Heart right ventricle (tissue), 16 donors: ENCODE measurements at regions of chr11 and their contacts with region 1.

Region 1: GRCh38 chr11:5808500-5809121 is at the start of gene OR52N2:
- DNase-seq: peak; percentile 35 to 78
- ATAC-seq: peak; percentile 81 to 97 (median 94)
- H3K4me3 ChIP-seq: peak within 1 kb of the TSS; percentile 13 to 66 (median 54)
- H3K27ac ChIP-seq: peak within 1 kb of the TSS in 2 of 10 donors; percentile 19 to 50
- H3K4me1 ChIP-seq: peaks cover 0 to 16% (median 5%) of the 10 kb centered on the region in 9 donors
- H3K27me3 ChIP-seq: peaks cover 0 to 6% (median 0%) of the 10 kb centered on the region in 7 donors
- CTCF ChIP-seq: peak; percentile 71 to 92 (median 84)
- total RNA-seq, gene OR52N2: not detected

Region 2: GRCh38 chr11:4626207-4627099 is 1182.2 kb before region 1 on chr11:
- intact Hi-C with region 1: loop called in 2 of 10 experiments (anchors 5 kb)
- DNase-seq: peak in 1 of 2 donors; percentile 65
- ATAC-seq: peak in 7 of 8 donors; percentile 55 to 76 (median 72)
- H3K4me3 ChIP-seq: no peak overlapping the region
- H3K27ac ChIP-seq: no peak overlapping the region
- H3K4me1 ChIP-seq: no peaks in the 10 kb centered on the region
- H3K27me3 ChIP-seq: peaks cover 0 to 3% (median 0%) of the 10 kb centered on the region in 7 donors
- CTCF ChIP-seq: peak; percentile 50 to 77 (median 69)

Region 3: GRCh38 chr11:5123802-5124521 is 684.6 kb before region 1 on chr11:
- intact Hi-C with region 1: loop called in 8 of 10 experiments (anchors 5 to 10 kb)
- DNase-seq: peak; percentile 18 to 54
- ATAC-seq: peak in 5 of 8 donors; percentile 47 to 70 (median 59)
- H3K4me3 ChIP-seq: no peak overlapping the region
- H3K27ac ChIP-seq: no peak overlapping the region
- H3K4me1 ChIP-seq: no peaks in the 10 kb centered on the region
- H3K27me3 ChIP-seq: peaks cover 0 to 11% (median 0%) of the 10 kb centered on the region in 7 donors
- CTCF ChIP-seq: peak; percentile 49 to 83 (median 72)

Region 4: GRCh38 chr11:5476184-5476819 is 332.3 kb before region 1 on chr11:
- intact Hi-C with region 1: loop called in 9 of 10 experiments (anchors 1 to 10 kb)
- DNase-seq: peak in 1 of 2 donors; percentile 38
- ATAC-seq: peak in 3 of 8 donors; percentile 39 to 59 (median 55)
- H3K4me3 ChIP-seq: no peak overlapping the region
- H3K27ac ChIP-seq: no peak overlapping the region
- H3K4me1 ChIP-seq: no peaks in the 10 kb centered on the region
- H3K27me3 ChIP-seq: peaks cover 0 to 6% (median 0%) of the 10 kb centered on the region in 7 donors
- CTCF ChIP-seq: peak; percentile 58 to 89 (median 83)

Region 5: DNA sequence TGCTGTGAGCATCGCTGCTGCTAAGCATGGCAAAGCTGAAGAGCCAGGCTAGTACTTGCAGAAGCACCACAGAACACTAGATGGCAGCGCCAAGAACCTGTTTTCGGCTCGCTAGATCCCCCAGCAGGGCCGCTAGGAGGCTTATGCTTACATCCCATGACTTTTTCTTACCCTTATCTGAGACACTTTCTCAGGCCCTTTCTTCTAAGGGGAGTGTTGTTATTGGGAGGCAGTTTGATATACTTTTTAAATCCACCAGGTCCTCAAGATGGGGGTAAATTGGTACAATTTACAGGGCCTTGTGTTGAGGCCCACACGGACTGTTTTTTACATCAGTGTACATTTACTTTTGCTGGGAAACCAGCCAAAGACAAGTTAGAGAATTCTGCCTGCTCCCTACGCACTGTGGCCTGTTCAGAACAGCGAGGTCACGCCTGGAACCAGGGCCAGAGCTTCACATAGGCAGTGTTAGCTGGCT is 208.2 kb before region 1 on chr11:
- intact Hi-C with region 1: loop called in 7 of 10 experiments (anchors 5 to 10 kb)
- DNase-seq: peak; percentile 50 to 63
- ATAC-seq: peak; percentile 69 to 85 (median 80)
- H3K4me3 ChIP-seq: no peak overlapping the region
- H3K27ac ChIP-seq: peak overlapping the region in 3 of 10 donors; percentile 27 to 56 (median 38)
- H3K4me1 ChIP-seq: peaks cover 6 to 23% (median 13%) of the 10 kb centered on the region in 9 donors
- H3K27me3 ChIP-seq: no peaks in the 10 kb centered on the region
- CTCF ChIP-seq: peak; percentile 29 to 85 (median 76)

Region 6: GRCh38 chr11:5658318-5658717 is 150.3 kb before region 1 on chr11:
- intact Hi-C with region 1: no loop called
- DNase-seq: no peak
- ATAC-seq: no peak
- H3K4me3 ChIP-seq: no peak overlapping the region
- H3K27ac ChIP-seq: no peak overlapping the region
- H3K4me1 ChIP-seq: no peaks in the 10 kb centered on the region
- H3K27me3 ChIP-seq: no peaks in the 10 kb centered on the region
- CTCF ChIP-seq: no peak

Region 7: DNA sequence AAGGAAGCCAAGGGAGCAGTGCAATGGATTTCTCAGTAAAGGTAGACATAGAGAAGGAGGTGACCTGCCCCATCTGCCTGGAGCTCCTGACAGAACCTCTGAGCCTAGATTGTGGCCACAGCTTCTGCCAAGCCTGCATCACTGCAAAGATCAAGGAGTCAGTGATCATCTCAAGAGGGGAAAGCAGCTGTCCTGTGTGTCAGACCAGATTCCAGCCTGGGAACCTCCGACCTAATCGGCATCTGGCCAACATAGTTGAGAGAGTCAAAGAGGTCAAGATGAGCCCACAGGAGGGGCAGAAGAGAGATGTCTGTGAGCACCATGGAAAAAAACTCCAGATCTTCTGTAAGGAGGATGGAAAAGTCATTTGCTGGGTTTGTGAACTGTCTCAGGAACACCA is 112.4 kb before region 1 on chr11:
- intact Hi-C with region 1: loop called in 1 of 10 experiments (anchors 5 kb)
- DNase-seq: no peak
- ATAC-seq: no peak
- H3K4me3 ChIP-seq: no peak overlapping the region
- H3K27ac ChIP-seq: peak overlapping the region in 2 of 10 donors; percentile 19 to 34
- H3K4me1 ChIP-seq: peaks cover 0 to 51% (median 15%) of the 10 kb centered on the region in 9 donors
- H3K27me3 ChIP-seq: no peaks in the 10 kb centered on the region
- CTCF ChIP-seq: no peak